Caco-2 (cell line): ENCODE measurements at regions of chr19 and their contacts with region 1.

Region 1: GRCh38 chr19:51168564-51169282 is 26.6 kb downstream of the SIGLEC7 start:
- DNase-seq: no peak
- H3K4me3 ChIP-seq: no peak overlapping the region
- H3K4me3 Mint-ChIP-seq: peak overlapping the region; percentile 64
- H3K27ac Mint-ChIP-seq: no peak overlapping the region
- H3K4me1 ChIP-seq: no peaks in the 10 kb centered on the region; the same call in 1 of the 2 replicates
- H3K4me1 Mint-ChIP-seq: peaks cover 5% of the 10 kb centered on the region
- H3K27me3 ChIP-seq: no peaks in the 10 kb centered on the region; the same call in 1 of the 2 replicates
- H3K27me3 Mint-ChIP-seq: peaks cover 14% of the 10 kb centered on the region
- CTCF ChIP-seq: no peak

Region 2: DNA sequence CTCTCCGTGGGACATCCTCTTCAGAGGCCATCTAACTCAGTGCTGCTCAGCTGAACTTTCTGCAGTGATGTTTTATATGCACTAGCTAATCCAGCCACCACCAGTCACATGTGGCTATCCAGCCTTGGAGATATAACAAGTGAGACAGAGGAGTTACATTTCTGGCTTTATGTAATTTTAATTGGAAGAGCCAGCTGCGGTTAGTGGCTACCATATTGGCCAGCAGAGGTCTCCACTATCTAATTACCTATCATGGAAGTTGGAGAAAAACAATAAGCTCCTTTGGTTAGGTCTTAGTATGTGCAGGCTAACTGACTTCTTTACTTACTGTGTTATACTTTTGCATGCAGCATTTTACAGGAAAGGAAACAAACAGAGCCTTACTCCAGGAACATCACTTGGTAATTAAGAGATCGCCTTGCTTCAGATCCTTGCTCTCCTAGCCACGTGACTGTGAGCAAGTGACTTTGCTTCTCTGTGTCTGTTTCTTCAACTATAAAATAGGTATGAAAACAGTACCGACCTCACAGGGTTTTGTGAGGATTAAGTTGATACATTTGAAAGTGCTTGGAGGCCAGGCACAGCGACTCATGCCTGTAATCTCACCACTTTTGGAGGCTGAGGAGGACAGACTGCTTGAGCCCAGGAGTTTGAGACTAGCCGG is 147.6 kb before region 1 on chr19:
- CTCF ChIA-PET with region 1: interaction called, 4 read pairs
- POLR2A ChIA-PET with region 1: no interaction called
- intact Hi-C with region 1: loop called (anchors 2 kb)
- DNase-seq: peak in 1 of 2 experiments; percentile 54
- H3K4me3 ChIP-seq: no peak overlapping the region
- H3K4me3 Mint-ChIP-seq: no peak overlapping the region
- H3K27ac Mint-ChIP-seq: no peak overlapping the region
- H3K4me1 ChIP-seq: 0 out of 2 replicates have a peak, but pooled peaks cover 4% of the 10 kb centered on the region
- H3K4me1 Mint-ChIP-seq: no peaks in the 10 kb centered on the region
- H3K27me3 ChIP-seq: peaks cover 3% of the 10 kb centered on the region
- H3K27me3 Mint-ChIP-seq: peaks cover 26% of the 10 kb centered on the region
- CTCF ChIP-seq: peak; percentile 67 to 70

Region 3: GRCh38 chr19:51108066-51108804 is 60.5 kb before region 1 on chr19 and contains the start of gene CTU1:
- CTCF ChIA-PET with region 1: no interaction called
- POLR2A ChIA-PET with region 1: no interaction called
- intact Hi-C with region 1: loop called (anchors 1 kb)
- DNase-seq: peak; percentile 99
- H3K4me3 ChIP-seq: peak within 1 kb of the TSS; percentile 88
- H3K4me3 Mint-ChIP-seq: peak within 1 kb of the TSS; percentile 96
- H3K27ac Mint-ChIP-seq: peak within 1 kb of the TSS; percentile 98
- H3K4me1 ChIP-seq: no peaks in the 10 kb centered on the region
- H3K4me1 Mint-ChIP-seq: peaks cover 9% of the 10 kb centered on the region
- H3K27me3 ChIP-seq: no peaks in the 10 kb centered on the region
- H3K27me3 Mint-ChIP-seq: no peaks in the 10 kb centered on the region
- CTCF ChIP-seq: no peak
- total RNA-seq, gene CTU1: 8.1 and 8.9 TPM in 2 replicates

Region 4: GRCh38 chr19:51226067-51226466 is 57.3 kb after region 1 on chr19:
- CTCF ChIA-PET with region 1: no interaction called
- POLR2A ChIA-PET with region 1: no interaction called
- intact Hi-C with region 1: no loop called
- DNase-seq: no peak
- H3K4me3 ChIP-seq: no peak overlapping the region
- H3K4me3 Mint-ChIP-seq: no peak overlapping the region
- H3K27ac Mint-ChIP-seq: no peak overlapping the region
- H3K4me1 ChIP-seq: no peaks in the 10 kb centered on the region
- H3K4me1 Mint-ChIP-seq: no peaks in the 10 kb centered on the region
- H3K27me3 ChIP-seq: no peaks in the 10 kb centered on the region
- H3K27me3 Mint-ChIP-seq: peaks cover 33% of the 10 kb centered on the region
- CTCF ChIP-seq: no peak